ENCODE measurements at regions of chr9 and their contacts with region 1.

Region 1: GRCh38 chr9:99906403-99907207 is at the start of gene STX17:
- DNase-seq: peak; percentile 88
- H3K4me3 ChIP-seq: peak within 1 kb of the TSS; percentile 89
- H3K27ac ChIP-seq: peak within 1 kb of the TSS; percentile 97
- H3K4me1 ChIP-seq: no peaks in the 10 kb centered on the region
- H3K27me3 ChIP-seq: no peaks in the 10 kb centered on the region
- CTCF ChIP-seq: no peak
- total RNA-seq, gene STX17: 23.3 to 37.3 TPM

Region 2: DNA sequence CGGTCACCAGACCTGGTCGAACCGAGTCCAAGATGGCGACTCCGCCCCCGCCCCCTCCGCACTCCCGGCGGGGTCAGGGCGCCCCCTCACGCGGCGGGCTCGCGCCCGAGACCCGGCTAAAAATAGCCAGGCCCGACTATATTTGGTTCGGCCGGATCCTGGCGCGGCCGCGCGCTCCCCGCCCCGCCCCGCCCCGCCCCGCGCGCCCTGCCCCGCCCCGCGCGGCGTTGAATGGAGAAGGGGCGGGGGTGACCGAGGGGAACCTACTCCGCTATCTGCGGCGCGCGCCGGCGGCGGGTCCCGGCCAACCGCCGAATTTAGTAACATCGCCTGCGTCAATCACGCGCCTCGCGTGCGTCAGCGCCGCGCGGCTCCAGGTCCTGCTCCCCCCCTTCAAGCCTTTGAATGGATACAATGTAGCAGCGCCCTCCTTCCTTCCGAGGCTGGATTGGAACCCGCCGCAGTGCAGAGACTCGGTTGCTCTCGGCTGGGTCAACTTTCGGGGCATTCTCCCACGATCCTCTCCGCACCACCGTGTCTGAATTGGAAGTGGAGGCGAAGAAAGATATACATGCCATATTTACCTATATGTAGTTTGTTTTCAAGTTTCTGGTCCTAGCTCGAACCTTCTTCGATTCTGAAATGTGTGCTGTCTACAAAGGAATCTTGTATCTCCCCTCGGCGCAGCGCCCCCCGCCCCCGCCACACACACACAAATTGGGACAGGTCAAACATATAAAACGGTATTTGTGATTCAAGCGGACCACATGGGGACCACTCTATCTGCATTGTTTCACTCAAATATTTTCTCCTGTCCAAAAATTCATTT is 86.5 kb before region 1 on chr9:
- intact Hi-C with region 1: loop called (anchors 5 kb)
- DNase-seq: peak; percentile 89
- H3K4me3 ChIP-seq: peak overlapping the region; percentile 67
- H3K27ac ChIP-seq: peak overlapping the region; percentile 88
- H3K4me1 ChIP-seq: peaks cover 10% of the 10 kb centered on the region
- H3K27me3 ChIP-seq: peaks cover 29% of the 10 kb centered on the region
- CTCF ChIP-seq: no peak

Region 3: DNA sequence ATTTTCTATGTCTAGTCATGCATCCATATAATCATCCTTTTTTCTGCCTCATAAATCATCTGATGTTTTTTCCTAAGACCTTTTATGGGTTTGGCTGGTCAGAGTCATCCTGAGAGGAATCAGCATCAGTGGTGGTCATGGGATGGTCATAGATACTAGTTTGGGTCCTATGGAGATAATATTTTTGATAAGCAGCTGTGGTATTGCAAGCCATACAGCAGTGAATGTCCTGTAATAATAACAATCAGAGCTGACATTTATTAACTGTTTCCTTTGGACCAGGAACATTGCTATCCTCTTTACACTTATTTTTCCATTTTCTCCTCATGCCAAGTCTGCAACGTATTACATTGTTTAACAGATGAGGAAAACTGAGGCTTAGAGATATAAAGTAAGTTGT is 363.1 kb after region 1 on chr9:
- intact Hi-C with region 1: no loop called
- DNase-seq: no peak
- H3K4me3 ChIP-seq: no peak overlapping the region
- H3K27ac ChIP-seq: no peak overlapping the region
- H3K4me1 ChIP-seq: no peaks in the 10 kb centered on the region
- H3K27me3 ChIP-seq: no peaks in the 10 kb centered on the region
- CTCF ChIP-seq: no peak

Region 4: DNA sequence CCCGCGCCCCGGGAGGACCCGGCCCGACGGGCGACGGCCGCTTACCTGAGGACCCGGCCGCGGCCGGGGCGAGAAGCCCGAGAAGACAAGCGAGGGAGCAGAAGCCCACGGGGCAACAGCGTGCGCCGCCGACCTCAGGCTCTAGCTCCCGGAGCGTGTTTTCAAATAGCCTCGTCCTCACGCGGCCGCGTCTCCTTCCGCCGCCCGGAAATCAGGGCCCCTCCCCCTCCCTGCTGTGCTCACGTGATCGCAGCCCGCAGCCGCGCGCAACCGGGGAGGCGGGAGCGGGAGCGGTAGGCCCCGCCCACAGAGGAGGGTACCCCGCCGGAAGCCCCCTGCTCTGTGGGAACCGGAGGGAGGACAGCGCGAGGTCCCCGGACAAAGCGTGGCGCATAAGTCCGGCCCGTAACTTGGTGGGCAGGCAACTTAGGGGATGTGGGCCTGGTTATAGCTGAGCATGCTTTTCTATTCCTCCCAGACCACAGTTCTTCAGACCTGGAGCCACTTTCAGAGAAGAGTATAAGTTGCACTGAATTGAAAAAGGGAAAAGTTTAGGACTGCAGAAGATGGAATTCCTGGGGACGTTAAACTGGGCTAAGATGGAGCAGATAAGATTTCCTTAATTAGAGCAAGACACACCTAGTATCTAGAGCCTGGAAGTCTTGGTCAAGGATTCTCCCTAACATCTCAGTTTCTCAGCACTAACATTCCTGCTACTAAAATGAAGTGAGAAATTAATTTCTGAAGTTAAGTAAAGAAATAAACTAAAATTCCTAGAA is 446.3 kb after region 1 on chr9 and contains the start of gene TEX10:
- intact Hi-C with region 1: no loop called
- DNase-seq: peak; percentile 91
- H3K4me3 ChIP-seq: peak within 1 kb of the TSS; percentile 90
- H3K27ac ChIP-seq: peak within 1 kb of the TSS; percentile 71
- H3K4me1 ChIP-seq: peaks cover 5% of the 10 kb centered on the region
- H3K27me3 ChIP-seq: no peaks in the 10 kb centered on the region
- CTCF ChIP-seq: no peak
- total RNA-seq, gene TEX10: 8.3 to 11.5 TPM

Measured in colonic mucosa (tissue), 4 donors.